ENCODE measurements at regions of chr1 and their contacts with region 1.

Region 1: DNA sequence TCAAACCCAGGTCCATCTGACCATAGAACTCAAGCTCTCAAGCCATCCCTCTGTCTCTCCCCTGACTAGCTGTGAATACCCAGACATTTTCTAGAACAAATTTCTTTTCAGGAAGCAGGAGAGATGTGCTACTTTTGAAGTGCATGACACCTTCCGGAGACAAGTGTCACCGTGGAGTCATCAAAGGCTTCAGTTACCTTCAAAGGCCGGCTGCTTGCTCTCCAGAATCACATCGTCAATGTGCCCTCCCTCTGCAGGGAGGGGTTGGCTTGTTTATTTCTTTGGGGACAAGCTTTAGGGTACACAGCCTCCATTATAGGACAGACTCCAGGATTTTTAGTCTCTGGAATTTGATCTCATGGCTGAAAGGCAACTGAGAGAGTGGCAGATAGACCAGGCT is 37.7 kb upstream of the IGSF21 start:
- DNase-seq: no peak
- H3K4me3 ChIP-seq: no peak overlapping the region
- H3K27ac ChIP-seq: no peak overlapping the region
- H3K4me1 ChIP-seq: no peaks in the 10 kb centered on the region
- H3K27me3 ChIP-seq: no peaks in the 10 kb centered on the region
- CTCF ChIP-seq: no peak
- POLR2A ChIP-seq: no peak

Region 2: DNA sequence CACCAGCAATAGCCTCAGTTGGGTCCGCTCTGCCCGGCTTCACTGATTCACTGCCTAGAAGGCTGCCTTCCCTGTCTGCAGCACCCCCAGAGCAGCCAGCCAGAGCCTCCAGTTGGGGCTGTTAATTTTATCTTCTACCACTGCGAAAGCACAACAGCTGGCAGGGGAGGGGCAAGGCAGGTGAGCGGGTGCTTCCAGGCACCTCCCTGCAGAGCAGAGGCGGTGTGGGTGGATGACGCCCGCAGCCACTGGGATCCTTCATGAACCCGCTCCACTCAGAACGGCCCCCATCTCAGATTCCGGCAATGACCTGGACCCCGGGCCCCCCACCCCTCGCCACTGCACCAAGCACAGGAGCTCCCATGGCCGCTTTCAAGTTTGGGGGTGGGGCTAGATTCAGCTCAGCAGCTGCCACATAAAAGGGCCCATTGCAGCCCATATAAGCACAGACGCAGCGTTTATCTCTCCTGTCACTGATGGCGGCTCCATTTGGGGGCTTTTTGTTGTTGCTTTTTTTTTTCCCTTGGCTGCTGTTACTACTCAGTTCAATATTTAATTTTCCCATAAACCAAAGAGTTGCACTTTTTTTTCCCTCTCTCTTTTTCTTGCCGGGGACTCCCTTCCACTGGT is 282.8 kb after region 1 on chr1:
- intact Hi-C with region 1: no loop called
- DNase-seq: no peak
- H3K4me3 ChIP-seq: no peak overlapping the region
- H3K27ac ChIP-seq: no peak overlapping the region
- H3K4me1 ChIP-seq: no peaks in the 10 kb centered on the region
- H3K27me3 ChIP-seq: no peaks in the 10 kb centered on the region
- CTCF ChIP-seq: no peak
- POLR2A ChIP-seq: no peak

Region 3: DNA sequence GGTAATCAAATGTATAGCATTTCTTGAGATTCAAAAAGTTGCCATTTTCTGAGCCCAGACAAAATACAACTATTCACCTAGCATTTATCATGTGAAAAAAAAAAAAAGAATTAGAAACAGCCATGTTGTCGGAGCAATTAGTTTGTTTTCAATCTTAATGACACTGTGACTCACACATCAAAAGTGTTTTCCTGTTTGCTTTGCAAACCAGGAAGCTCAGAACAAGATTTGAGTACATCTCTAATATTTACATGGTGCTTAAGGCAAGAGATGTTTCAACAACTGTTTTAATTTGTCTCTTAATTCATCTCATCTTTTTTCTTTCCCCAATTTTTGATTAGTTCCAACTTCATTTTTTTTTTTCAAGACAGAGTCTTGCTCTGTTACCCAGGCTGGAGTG is 1477.9 kb after region 1 on chr1:
- intact Hi-C with region 1: loop called (anchors 5 kb)
- DNase-seq: no peak
- H3K4me3 ChIP-seq: no peak overlapping the region
- H3K27ac ChIP-seq: no peak overlapping the region
- H3K4me1 ChIP-seq: no peaks in the 10 kb centered on the region
- H3K27me3 ChIP-seq: no peaks in the 10 kb centered on the region
- CTCF ChIP-seq: no peak
- POLR2A ChIP-seq: no peak